ENCODE measurements at regions of chr2 and their contacts with region 1.

Region 1: DNA sequence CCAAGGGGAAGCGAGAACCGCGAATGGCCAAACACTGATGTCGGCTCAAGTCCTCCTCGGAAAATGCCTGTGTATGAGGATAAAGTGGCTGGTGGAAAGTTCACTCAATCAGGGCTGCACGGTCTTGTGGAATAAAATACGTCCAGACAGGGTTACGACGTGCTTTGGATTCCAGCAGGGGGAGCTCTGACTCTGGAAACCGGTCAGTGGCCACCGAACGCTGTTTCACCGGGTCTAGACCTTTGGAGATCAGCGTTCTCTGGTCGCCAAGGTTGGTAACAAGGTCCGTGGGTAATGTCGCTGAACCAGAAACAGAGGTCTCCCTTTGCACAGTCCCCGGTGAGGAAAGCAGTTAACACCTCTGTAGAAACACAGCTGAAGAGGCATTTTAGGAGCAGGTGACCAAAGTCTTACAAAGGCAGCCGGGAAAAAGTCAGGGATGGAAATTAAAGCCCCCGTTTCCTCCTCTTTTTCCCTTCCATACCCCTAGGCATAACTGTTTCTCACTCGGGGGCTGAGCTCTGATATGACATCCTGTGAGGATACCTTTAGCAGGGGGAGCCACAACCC is 47.8 kb downstream of the CDCA7 start:
- DNase-seq: no peak
- H3K4me3 ChIP-seq: peak overlapping the region in 1 of 4 donors; percentile 42
- H3K27ac ChIP-seq: no peak overlapping the region
- H3K4me1 ChIP-seq: peaks cover 0 to 16% (median 4%) of the 10 kb centered on the region in 3 donors
- H3K27me3 ChIP-seq: peaks cover 0 to 86% (median 1%) of the 10 kb centered on the region in 4 donors
- CTCF ChIP-seq: peak; percentile 75 to 93 (median 86)
- POLR2A ChIP-seq: no peak

Region 2: DNA sequence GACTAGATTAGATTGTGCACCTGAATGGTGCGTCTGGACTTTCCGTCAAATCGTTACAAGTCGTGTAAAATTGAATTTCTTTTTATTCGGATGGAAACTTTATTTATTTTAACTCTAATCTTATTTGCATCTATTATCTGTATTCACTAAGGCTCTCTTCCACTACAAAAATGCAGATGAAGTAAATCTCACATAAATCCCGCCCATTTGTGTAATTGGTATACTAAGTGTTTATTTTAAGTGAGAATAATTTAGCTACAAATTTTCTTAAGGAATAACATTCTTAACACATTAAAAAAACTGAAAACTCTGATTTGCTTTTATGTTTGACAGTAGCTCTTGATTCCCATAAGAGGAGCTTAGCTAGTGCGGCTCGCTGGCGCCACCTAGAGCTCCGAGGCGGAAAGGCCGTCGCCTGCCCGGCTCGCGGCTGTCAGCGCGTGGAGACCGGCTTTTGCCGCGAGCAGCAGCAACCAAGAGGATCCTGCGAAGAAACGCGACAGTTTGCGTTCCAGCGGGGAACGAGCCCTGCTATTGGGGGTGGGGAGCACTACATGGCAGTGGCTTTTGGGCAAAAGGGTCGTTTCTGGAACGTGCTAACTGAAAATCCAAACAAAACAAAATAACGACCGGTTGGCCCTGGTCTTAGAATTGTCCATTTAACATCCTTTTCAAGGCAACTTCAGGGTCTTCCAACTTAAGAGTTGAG is 939.0 kb after region 1 on chr2:
- intact Hi-C with region 1: loop called (anchors 5 kb)
- DNase-seq: peak; percentile 23
- H3K4me3 ChIP-seq: peak overlapping the region in 2 of 4 donors; percentile 18 to 44
- H3K27ac ChIP-seq: no peak overlapping the region
- H3K4me1 ChIP-seq: peaks cover 36 to 71% (median 38%) of the 10 kb centered on the region in 3 donors
- H3K27me3 ChIP-seq: peaks cover 47 to 93% (median 70%) of the 10 kb centered on the region in 4 donors
- CTCF ChIP-seq: peak; percentile 78 to 98 (median 96)
- POLR2A ChIP-seq: no peak